ENCODE measurements at regions of chr7 and their contacts with region 1.

Region 1: DNA sequence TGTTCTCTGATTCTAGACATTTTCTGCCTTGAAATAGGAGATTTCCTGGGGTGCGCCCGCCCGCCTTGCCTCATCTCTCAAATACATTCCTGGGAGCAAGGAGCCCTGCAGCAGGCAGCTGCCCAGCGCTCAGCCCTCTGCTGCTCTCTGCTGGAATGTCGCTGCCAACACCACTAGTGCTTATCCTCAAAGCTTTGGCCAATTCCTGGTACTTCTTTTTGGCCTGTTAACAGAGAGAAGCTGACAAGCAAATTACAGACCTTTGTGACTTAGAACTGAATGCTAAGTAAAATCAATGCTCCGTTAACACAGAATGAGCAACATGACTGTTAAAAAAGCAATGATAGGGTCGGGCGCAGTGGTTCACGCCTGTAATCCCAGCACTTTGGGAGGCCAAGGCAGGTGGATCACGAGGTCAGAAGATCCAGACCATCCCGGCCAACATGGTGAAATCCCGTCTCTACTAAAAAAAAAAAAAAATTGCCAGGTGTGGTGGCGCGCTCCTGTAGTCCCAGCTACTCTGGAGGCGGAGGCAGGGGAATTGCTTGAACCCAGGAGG is 41.9 kb upstream of the SYPL1 start:
- DNase-seq: peak; percentile 59
- H3K4me3 ChIP-seq: no peak overlapping the region
- H3K27ac ChIP-seq: no peak overlapping the region
- H3K27me3 ChIP-seq: peaks cover 13% of the 10 kb centered on the region
- CTCF ChIP-seq: peak; percentile 99

Region 2: DNA sequence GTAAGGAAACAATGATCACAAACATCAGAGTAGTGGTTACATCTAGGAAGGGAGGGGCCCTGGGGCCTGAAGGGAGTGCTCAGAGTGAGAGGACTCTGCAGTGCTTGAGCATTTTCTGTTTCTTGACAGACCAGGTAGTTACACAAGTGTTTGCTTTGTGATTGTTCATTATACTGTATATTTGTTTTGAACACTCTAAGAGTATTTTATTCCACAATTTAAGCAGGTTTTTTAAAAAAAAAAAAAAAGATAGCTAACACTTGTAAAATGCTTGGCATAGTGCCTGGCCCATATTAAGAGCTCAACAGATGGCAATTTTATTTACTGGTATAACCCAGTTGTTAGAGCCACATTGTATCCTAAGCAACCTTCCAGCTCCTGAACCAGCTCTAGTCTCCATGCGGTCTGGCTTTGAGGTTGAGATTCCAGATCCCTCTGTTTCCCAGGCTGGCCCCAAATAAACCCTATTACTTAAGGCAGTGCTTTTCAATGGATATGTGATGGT is 257.5 kb before region 1 on chr7:
- CTCF ChIA-PET with region 1: no interaction called
- POLR2A ChIA-PET with region 1: no interaction called
- DNase-seq: no peak
- H3K4me3 ChIP-seq: no peak overlapping the region
- H3K27ac ChIP-seq: no peak overlapping the region
- H3K27me3 ChIP-seq: no peaks in the 10 kb centered on the region
- CTCF ChIP-seq: no peak

Region 3: GRCh38 chr7:106041140-106041717 is 112.7 kb before region 1 on chr7:
- CTCF ChIA-PET with region 1: interaction called, 15 read pairs
- POLR2A ChIA-PET with region 1: no interaction called
- DNase-seq: no peak
- H3K4me3 ChIP-seq: no peak overlapping the region
- H3K27ac ChIP-seq: no peak overlapping the region
- H3K27me3 ChIP-seq: peaks cover 8% of the 10 kb centered on the region
- CTCF ChIP-seq: peak; percentile 62

Region 4: DNA sequence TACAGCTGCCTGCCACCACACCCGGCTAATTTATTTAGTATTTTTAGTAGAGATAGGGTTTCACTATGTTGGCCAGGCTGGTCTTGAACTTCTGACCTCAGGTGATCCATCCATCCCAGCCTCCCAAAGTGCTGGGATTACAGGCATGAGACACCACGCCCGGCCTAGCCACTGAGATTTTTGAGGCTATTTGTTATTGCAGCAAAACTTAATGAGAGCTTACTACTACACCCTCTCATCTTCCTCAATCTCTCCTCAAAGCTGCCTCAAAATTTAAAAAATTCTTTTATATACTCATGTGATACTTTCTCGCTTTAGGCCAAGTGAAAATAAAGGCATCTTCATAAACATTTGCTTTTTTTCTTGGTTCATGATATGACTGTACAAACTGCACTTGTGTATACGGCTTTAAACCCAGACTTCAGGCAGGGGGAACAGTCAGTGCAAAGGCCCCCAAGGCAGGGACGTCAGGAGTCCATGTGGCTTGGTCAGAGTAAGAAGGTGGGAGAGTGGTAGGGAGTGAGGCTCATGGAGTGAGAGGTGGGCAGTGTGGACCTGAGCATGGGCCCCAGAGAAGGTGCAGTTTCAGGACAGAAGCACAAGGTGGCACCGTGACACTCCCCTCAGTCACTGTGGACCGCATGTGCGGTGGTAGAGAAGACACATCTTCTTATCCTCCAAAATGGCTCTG is 97.3 kb before region 1 on chr7:
- CTCF ChIA-PET with region 1: interaction called, 153 read pairs
- POLR2A ChIA-PET with region 1: no interaction called
- DNase-seq: peak; percentile 26
- H3K4me3 ChIP-seq: no peak overlapping the region
- H3K27ac ChIP-seq: no peak overlapping the region
- H3K27me3 ChIP-seq: peaks cover 13% of the 10 kb centered on the region
- CTCF ChIP-seq: peak; percentile 90

Region 5: DNA sequence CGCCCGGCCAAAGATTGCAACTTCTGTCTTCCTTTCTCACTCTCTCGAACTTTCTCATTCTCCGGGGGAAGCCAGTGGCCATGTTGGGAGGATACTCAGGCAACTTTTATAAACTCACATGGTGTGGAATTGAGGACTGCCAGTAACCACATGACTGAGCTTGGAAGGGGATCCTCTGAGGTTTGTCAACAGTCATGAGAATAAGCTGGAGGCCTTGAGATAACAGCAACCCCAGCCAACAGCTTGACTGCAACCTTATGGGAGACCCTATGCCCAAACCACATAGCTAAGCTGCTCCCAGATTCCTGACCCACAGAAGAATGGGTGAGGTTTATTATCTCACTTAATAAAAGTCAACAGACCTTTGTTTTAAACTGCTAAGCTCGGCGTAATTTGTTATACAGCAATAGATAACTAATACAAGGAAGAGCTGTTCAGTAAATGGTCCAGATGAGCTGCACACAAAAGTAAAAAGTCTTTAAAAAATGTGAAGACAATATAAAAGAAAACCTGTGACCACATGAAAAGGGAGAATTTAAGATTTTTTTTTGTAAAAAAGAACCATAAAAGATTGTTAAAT is 51.5 kb before region 1 on chr7:
- CTCF ChIA-PET with region 1: interaction called, 12 read pairs
- POLR2A ChIA-PET with region 1: no interaction called
- DNase-seq: no peak
- H3K4me3 ChIP-seq: no peak overlapping the region
- H3K27ac ChIP-seq: no peak overlapping the region
- H3K27me3 ChIP-seq: no peaks in the 10 kb centered on the region
- CTCF ChIP-seq: no peak

Region 6: DNA sequence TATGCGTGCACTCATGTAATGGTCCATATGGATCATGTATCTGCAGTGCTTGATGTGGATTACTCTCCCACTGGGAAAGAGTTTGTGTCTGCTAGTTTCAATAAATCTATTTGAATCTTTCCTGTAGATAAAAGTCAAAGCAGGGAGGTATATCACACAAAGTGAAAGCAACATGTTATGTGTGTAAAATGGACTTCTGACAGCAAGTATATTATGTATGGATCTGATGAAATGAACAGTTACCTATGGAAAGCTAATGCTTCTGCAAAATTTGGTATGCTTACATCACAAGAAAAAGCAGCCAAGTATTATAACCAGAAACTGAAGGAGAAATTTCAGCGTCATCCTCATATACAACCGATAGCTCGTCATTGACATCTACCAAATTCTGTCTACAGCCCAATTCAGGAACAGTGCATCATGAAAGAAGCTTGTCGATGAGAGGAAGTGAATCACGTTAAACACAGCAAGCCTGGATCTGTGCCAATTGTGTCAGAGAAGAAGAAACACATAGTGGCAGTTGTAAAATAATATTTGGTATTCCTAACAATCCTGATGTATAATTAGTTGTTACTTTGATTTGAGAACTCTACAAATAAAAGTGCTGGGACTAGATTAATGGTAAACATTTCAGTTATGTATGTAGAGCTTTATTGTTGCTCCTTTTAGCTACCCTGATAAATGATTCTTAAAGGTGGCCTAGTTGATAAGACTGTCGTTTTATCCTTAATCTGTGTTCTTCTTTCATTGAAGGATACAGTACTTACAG is 27.6 kb before region 1 on chr7:
- CTCF ChIA-PET with region 1: interaction called, 17 read pairs
- POLR2A ChIA-PET with region 1: no interaction called
- DNase-seq: no peak
- H3K4me3 ChIP-seq: peak overlapping the region; percentile 22
- H3K27ac ChIP-seq: no peak overlapping the region
- H3K27me3 ChIP-seq: no peaks in the 10 kb centered on the region
- CTCF ChIP-seq: no peak

Region 7: GRCh38 chr7:106273009-106273668 is 119.2 kb after region 1 on chr7:
- CTCF ChIA-PET with region 1: no interaction called
- POLR2A ChIA-PET with region 1: no interaction called
- DNase-seq: no peak
- H3K4me3 ChIP-seq: no peak overlapping the region
- H3K27ac ChIP-seq: no peak overlapping the region
- H3K27me3 ChIP-seq: no peaks in the 10 kb centered on the region
- CTCF ChIP-seq: no peak